ENCODE measurements at regions of chr2 and their contacts with region 1.

Region 1: DNA sequence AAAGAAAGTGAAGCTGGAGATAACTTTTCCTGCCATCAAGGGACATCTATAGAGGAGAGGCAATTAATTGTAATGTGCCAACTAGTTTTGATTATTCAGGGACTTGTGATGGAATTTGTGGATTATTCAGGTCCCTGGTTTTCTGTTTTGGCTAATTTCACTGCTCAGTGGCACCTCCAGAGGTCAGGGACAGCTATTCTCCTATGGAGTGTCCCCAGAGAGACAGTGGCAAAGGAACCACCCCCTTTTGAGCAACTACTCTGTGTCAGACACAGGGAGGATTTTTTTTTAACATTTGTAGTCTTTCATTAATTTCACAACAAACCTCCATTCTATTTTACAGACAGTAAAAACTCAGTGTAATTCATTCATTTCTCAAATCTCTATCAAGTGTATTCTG is 206.0 kb upstream of the SPRED2 start:
- DNase-seq: no peak
- H3K4me3 ChIP-seq: no peak overlapping the region
- CTCF ChIP-seq: no peak

Region 2: DNA sequence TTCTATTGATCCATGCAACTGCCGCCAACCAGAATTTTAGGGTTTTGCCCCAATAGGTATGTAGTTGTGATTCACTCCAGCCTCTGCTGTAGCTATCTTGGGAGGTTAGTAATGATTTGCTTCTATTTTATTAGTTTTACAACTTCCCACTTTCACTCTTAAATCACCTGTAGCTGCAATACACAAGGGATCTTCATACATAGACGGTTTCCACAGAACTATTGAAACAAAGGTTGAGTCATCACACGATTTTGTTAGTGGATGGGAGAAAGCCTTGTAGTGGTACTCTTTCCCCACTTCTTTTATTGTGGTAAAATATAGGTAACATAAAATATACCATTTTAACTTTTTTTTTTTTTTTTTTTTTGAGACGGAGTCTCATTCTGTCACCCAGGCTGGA is 101.8 kb before region 1 on chr2:
- CTCF ChIA-PET with region 1: no interaction called
- POLR2A ChIA-PET with region 1: no interaction called
- DNase-seq: no peak
- H3K4me3 ChIP-seq: no peak overlapping the region
- CTCF ChIP-seq: no peak

Region 3: GRCh38 chr2:65654496-65654895 is 16.1 kb after region 1 on chr2:
- CTCF ChIA-PET with region 1: interaction called, 37 read pairs
- POLR2A ChIA-PET with region 1: no interaction called
- DNase-seq: no peak
- H3K4me3 ChIP-seq: no peak overlapping the region
- CTCF ChIP-seq: no peak

Region 4: GRCh38 chr2:65710779-65711295 is 72.4 kb after region 1 on chr2:
- CTCF ChIA-PET with region 1: interaction called, 30 read pairs
- POLR2A ChIA-PET with region 1: no interaction called
- DNase-seq: no peak
- H3K4me3 ChIP-seq: no peak overlapping the region
- CTCF ChIP-seq: no peak

Region 5: DNA sequence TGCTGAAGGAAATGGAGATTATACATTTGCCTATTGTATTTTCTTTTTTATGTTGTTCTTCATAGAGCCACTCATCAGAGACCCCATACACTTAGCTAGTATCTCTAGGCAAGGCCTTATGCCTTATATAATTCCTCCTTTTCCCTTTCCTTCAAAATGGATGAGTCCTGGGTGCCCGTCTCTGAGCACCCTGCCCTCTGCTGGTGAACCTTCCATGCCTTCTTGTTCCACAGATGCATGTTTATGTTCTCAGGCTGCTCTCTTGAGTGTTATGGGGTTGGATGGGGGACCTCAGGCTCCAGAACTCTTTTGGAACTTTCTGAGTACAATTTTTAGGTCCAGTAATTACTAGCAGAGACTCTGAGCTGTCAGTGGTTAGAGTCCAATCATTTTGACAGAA is 162.6 kb after region 1 on chr2:
- CTCF ChIA-PET with region 1: interaction called, 39 read pairs
- POLR2A ChIA-PET with region 1: no interaction called
- DNase-seq: no peak
- H3K4me3 ChIP-seq: no peak overlapping the region
- CTCF ChIP-seq: peak; percentile 50